Ascending aorta (tissue), 2 donors: ENCODE measurements at regions of chr9 and their contacts with region 1.

Region 1: DNA sequence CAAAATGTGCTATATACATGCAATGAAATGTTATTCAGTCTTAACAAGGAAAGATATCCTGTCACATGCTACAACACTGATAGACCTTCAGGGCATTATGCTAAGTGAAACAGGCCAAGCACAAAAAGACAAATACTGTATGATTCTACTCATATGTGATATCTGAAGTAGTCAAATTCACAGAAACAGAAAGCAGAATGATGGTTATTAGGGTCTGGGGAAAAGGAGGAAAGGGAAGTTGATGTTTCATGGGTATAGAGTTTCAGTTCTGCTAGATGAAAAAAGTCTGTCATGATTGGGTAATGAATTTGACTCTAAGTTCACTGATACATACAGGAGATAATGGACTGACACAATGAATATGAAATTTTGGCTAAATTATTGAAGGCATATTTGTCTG is 11.2 kb upstream of the RIC1 start:
- DNase-seq: no peak
- H3K4me3 ChIP-seq: no peak overlapping the region
- H3K27ac ChIP-seq: no peak overlapping the region
- H3K4me1 ChIP-seq: peaks cover 0 to 17% of the 10 kb centered on the region in 2 donors
- H3K27me3 ChIP-seq: no peaks in the 10 kb centered on the region
- CTCF ChIP-seq: no peak

Region 2: DNA sequence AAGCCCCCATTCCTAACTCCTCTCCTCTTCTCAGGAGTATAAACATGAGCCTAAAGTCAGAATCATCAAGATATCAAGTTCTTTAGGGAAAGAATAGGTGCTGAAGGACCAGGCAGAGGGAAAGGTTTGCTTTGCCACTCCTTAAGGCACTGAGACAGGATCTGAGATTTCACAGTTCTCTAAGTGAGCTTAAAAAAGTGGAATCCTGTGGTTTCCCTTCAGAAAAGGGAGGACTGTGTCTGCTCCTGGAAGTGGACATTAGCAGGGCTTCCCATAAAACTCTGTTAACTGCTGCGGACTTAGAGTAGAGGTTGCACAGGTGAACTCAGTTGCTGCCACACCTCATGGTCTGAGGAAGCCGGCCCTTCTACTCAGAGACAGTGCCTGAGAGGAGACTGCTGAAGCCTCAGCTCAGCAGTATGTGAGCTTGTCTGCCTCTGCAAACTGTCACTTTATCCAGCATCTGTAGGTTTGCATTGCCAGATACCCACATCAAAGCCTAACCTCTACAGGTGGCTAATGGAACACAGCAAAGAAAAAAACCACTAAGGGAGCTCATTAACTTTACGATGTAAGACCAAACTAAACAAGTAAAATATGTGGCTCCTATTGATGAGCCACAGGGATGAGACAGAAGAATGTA is 54.1 kb after region 1 on chr9:
- intact Hi-C with region 1: loop called (anchors 10 kb)
- DNase-seq: no peak
- H3K4me3 ChIP-seq: no peak overlapping the region
- H3K27ac ChIP-seq: no peak overlapping the region
- H3K4me1 ChIP-seq: no peaks in the 10 kb centered on the region
- H3K27me3 ChIP-seq: no peaks in the 10 kb centered on the region
- CTCF ChIP-seq: no peak